CD4-positive, alpha-beta T cell (primary cell): ENCODE measurements at regions of chr11 and their contacts with region 1.

Region 1: DNA sequence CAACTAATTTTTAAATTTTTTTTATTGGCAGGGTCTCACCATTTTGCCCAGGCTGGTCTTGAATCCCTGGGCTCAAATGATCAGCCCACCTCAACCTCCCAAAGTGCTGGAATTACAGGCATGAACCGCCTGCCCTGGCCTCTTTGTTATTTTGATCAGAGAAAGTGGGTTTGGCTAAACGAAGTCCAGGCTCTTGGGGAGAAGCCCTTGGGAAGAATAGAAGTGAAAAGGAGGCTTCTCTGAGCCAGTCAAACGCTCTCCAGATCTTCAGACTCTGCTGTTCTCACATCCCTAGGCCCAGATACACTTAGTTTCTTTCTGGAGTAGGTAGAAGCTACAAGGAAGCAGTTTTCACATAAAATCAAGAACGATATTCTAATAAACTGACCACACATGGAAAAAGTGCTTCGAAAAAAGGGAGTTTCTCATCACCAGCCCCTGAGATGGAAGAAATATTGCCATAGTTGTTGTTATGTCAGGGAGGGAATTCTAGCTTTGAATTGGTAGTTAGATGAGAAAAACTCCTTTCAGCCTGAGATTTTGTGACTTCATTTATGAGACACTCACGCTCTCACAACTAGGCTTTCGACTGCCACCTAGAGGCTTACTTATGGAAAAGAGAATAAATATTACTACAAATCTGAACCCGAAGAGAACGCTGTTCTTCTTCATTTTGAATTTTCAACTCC is 41.7 kb upstream of the AQP11 start:
- DNase-seq: peak in 9 of 14 experiments; percentile 0 to 73 (median 22)
- ATAC-seq: peak; percentile 43
- H3K4me3 ChIP-seq: no peak overlapping the region
- H3K4me3 Mint-ChIP-seq: no peak overlapping the region
- H3K27ac ChIP-seq: no peak overlapping the region
- H3K27ac Mint-ChIP-seq: no peak overlapping the region
- H3K4me1 ChIP-seq: no peaks in the 10 kb centered on the region
- H3K4me1 Mint-ChIP-seq: peaks cover 6% of the 10 kb centered on the region
- H3K27me3 ChIP-seq: no peaks in the 10 kb centered on the region
- H3K27me3 Mint-ChIP-seq: no peaks in the 10 kb centered on the region
- CTCF ChIP-seq: peak; percentile 72

Region 2: DNA sequence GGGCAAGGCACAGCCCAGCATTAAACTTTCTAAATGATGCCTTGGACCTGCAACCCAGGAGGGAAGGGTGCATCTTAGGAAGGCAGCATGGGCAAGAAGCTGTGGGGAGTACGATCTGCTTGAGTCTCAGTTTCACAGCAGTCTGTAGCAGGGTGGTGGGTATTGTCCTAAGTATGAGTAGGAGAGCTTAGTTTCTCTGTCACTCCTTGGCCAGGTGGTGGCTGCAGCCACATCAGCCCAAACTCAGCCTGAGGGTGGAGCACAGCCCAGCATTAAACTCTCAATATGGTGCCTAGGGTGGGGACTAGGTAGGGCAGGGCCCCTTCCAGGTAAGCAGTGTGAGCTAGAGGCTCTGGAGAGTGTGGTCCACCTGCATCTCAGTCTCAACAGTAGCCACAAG is 601.8 kb before region 1 on chr11:
- CTCF ChIA-PET with region 1: no interaction called
- POLR2A ChIA-PET with region 1: no interaction called
- intact Hi-C with region 1: no loop called
- DNase-seq: no peak
- ATAC-seq: no peak
- H3K4me3 ChIP-seq: no peak overlapping the region
- H3K4me3 Mint-ChIP-seq: no peak overlapping the region
- H3K27ac ChIP-seq: no peak overlapping the region
- H3K27ac Mint-ChIP-seq: no peak overlapping the region
- H3K4me1 ChIP-seq: no peaks in the 10 kb centered on the region
- H3K4me1 Mint-ChIP-seq: peaks cover 4% of the 10 kb centered on the region
- H3K27me3 ChIP-seq: no peaks in the 10 kb centered on the region
- H3K27me3 Mint-ChIP-seq: no peaks in the 10 kb centered on the region
- CTCF ChIP-seq: no peak

Region 3: GRCh38 chr11:77127232-77127911 is 420.6 kb before region 1 on chr11:
- CTCF ChIA-PET with region 1: interaction called, 4 read pairs
- POLR2A ChIA-PET with region 1: no interaction called
- intact Hi-C with region 1: loop called (anchors 1 kb)
- DNase-seq: peak; percentile 20 to 76 (median 51)
- ATAC-seq: peak; percentile 83
- H3K4me3 ChIP-seq: peak overlapping the region; percentile 56
- H3K4me3 Mint-ChIP-seq: peak overlapping the region; percentile 74
- H3K27ac ChIP-seq: no peak overlapping the region
- H3K27ac Mint-ChIP-seq: no peak overlapping the region
- H3K4me1 ChIP-seq: peaks cover 14% of the 10 kb centered on the region
- H3K4me1 Mint-ChIP-seq: peaks cover 12% of the 10 kb centered on the region
- H3K27me3 ChIP-seq: peaks cover 3 to 4% of the 10 kb centered on the region in 2 experiments
- H3K27me3 Mint-ChIP-seq: no peaks in the 10 kb centered on the region
- CTCF ChIP-seq: peak; percentile 99

Region 4: GRCh38 chr11:77187776-77188632 is 360.0 kb before region 1 on chr11:
- CTCF ChIA-PET with region 1: no interaction called
- POLR2A ChIA-PET with region 1: no interaction called
- intact Hi-C with region 1: loop called (anchors 1 kb)
- DNase-seq: peak; percentile 29 to 78 (median 49)
- ATAC-seq: peak; percentile 65
- H3K4me3 ChIP-seq: no peak overlapping the region
- H3K4me3 Mint-ChIP-seq: no peak overlapping the region
- H3K27ac ChIP-seq: no peak overlapping the region
- H3K27ac Mint-ChIP-seq: no peak overlapping the region
- H3K4me1 ChIP-seq: no peaks in the 10 kb centered on the region
- H3K4me1 Mint-ChIP-seq: no peaks in the 10 kb centered on the region
- H3K27me3 ChIP-seq: no peaks in the 10 kb centered on the region
- H3K27me3 Mint-ChIP-seq: no peaks in the 10 kb centered on the region
- CTCF ChIP-seq: peak; percentile 78

Region 5: GRCh38 chr11:77267962-77268361 is 280.0 kb before region 1 on chr11:
- CTCF ChIA-PET with region 1: no interaction called
- POLR2A ChIA-PET with region 1: no interaction called
- intact Hi-C with region 1: no loop called
- DNase-seq: no peak
- ATAC-seq: no peak
- H3K4me3 ChIP-seq: no peak overlapping the region
- H3K4me3 Mint-ChIP-seq: no peak overlapping the region
- H3K27ac ChIP-seq: no peak overlapping the region
- H3K27ac Mint-ChIP-seq: no peak overlapping the region
- H3K4me1 ChIP-seq: no peaks in the 10 kb centered on the region
- H3K4me1 Mint-ChIP-seq: no peaks in the 10 kb centered on the region
- H3K27me3 ChIP-seq: peaks cover 4 to 12% of the 10 kb centered on the region in 2 experiments
- H3K27me3 Mint-ChIP-seq: peaks cover 10% of the 10 kb centered on the region
- CTCF ChIP-seq: no peak

Region 6: DNA sequence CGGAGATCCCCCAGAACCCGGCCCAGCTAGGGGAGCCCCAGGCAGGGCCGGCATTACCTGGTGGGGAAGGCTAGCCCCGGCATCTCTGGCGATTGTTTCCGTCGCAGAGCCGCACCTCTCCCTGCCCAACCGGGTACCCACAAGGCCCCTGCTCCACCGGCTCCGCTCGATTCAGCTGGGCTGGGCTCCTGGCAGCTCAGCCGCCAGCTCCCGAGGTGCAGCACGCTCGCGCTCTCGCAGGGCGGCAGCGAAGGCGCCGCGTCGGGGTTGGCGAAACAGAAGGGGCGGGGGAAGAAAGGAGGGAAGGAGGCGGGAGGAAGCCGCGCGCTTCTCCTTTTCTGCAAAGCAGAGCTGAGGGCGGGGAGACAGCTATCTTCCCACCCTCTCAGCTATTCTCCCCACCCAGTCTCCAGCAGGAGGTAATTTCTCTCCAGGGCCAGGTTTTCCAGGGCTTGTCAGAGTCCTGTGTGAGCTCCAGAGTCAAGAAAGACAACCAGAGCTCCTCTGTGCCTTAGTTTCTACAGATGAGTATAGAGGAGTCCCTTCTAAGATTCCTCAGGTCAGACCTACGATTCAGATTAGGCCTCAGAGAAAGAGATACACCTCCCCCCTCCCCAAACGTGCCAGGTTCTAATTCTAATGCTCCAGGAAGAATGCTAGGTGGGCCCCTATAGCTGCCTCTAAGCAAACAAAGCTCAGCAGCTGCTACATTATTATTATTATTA is 136.1 kb before region 1 on chr11:
- CTCF ChIA-PET with region 1: interaction called, 6 read pairs
- POLR2A ChIA-PET with region 1: no interaction called
- intact Hi-C with region 1: loop called in 1 of 2 experiments (anchors 2 kb)
- DNase-seq: peak; percentile 59 to 89 (median 72)
- ATAC-seq: peak; percentile 99
- H3K4me3 ChIP-seq: peak overlapping the region; percentile 73
- H3K4me3 Mint-ChIP-seq: peak overlapping the region; percentile 97
- H3K27ac ChIP-seq: peak overlapping the region in 1 of 2 donors; percentile 25
- H3K27ac Mint-ChIP-seq: peak overlapping the region; percentile 76
- H3K4me1 ChIP-seq: peaks cover 22% of the 10 kb centered on the region
- H3K4me1 Mint-ChIP-seq: peaks cover 42% of the 10 kb centered on the region
- H3K27me3 ChIP-seq: no peaks in the 10 kb centered on the region
- H3K27me3 Mint-ChIP-seq: no peaks in the 10 kb centered on the region
- CTCF ChIP-seq: peak; percentile 11

Region 7: DNA sequence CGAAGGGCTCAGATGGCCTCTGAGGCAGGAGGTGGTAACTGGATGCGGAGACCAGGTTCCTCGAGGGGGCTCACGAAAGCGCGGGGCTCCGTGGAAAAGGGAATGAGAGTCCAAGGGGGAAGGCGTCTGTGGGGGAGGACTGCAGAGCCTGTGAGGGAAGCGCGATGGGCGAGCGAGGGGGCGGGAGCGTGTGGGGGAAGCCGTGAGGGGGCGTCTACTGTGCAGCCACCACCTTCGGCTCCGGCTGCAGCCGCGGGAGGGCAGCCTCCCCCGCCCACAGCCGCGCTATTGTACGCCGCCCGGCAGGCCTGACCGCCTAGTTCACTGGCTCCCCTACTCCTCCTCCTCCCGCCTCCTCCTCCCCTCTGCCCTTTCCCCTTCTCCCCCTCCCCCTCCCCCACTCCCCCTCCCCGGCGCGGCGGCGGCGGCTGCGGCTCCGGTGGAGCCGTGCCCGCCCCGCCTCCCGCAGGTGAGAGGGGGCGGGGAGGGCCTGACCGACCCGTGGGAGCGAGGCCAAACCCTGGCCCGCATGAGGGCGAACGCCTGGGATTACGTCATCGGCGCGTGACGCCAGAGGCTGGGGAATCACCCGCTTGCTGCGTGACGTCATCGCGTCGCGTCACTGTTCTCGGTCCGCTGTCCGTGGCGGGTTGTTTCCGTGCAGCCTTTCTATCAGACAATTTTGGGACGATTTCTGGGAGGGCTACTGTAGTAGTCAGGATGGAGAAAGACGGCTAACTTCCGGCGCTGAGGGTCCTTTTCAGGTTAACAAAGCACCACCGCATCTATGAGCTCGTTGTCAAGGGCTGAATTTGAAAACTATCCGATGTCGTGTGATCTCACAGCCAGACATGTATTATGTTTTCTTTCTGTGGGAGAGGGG is 74.0 kb before region 1 on chr11 and contains the start of gene PAK1:
- CTCF ChIA-PET with region 1: interaction called, 7 read pairs
- POLR2A ChIA-PET with region 1: no interaction called
- intact Hi-C with region 1: loop called in 1 of 2 experiments (anchors 1 kb)
- DNase-seq: peak; percentile 61 to 99 (median 85)
- ATAC-seq: peak; percentile 73
- H3K4me3 ChIP-seq: peak within 1 kb of the TSS; percentile 64
- H3K4me3 Mint-ChIP-seq: peak within 1 kb of the TSS; percentile 97
- H3K27ac ChIP-seq: peak within 1 kb of the TSS in 1 of 2 donors; percentile 29
- H3K27ac Mint-ChIP-seq: peak within 1 kb of the TSS; percentile 96
- H3K4me1 ChIP-seq: peaks cover 14% of the 10 kb centered on the region
- H3K4me1 Mint-ChIP-seq: peaks cover 25% of the 10 kb centered on the region
- H3K27me3 ChIP-seq: peaks cover 2 to 5% of the 10 kb centered on the region in 2 experiments
- H3K27me3 Mint-ChIP-seq: peaks cover 10% of the 10 kb centered on the region
- CTCF ChIP-seq: no peak
- total RNA-seq, gene PAK1: 6.9 to 12.6 TPM

Region 8: GRCh38 chr11:77589521-77590193 is 41.6 kb after region 1 on chr11 and contains the start of gene AQP11:
- CTCF ChIA-PET with region 1: no interaction called
- POLR2A ChIA-PET with region 1: no interaction called
- intact Hi-C with region 1: no loop called
- DNase-seq: peak in 12 of 14 experiments; percentile 8 to 70 (median 40)
- ATAC-seq: peak; percentile 48
- H3K4me3 ChIP-seq: peak within 1 kb of the TSS; percentile 51
- H3K4me3 Mint-ChIP-seq: peak within 1 kb of the TSS; percentile 93
- H3K27ac ChIP-seq: no peak within 1 kb of the TSS
- H3K27ac Mint-ChIP-seq: no peak within 1 kb of the TSS
- H3K4me1 ChIP-seq: peaks cover 15% of the 10 kb centered on the region
- H3K4me1 Mint-ChIP-seq: peaks cover 15% of the 10 kb centered on the region
- H3K27me3 ChIP-seq: no peaks in the 10 kb centered on the region
- H3K27me3 Mint-ChIP-seq: peaks cover 18% of the 10 kb centered on the region
- CTCF ChIP-seq: no peak
- total RNA-seq, gene AQP11: not detected